ENCODE measurements at regions of chr7 and their contacts with region 1.

Region 1: GRCh38 chr7:111752022-111752582 is 189.8 kb upstream of the IMMP2L start:
- DNase-seq: peak; percentile 14 to 58 (median 27)
- ATAC-seq: peak; percentile 75
- H3K4me3 ChIP-seq: no peak overlapping the region
- H3K4me3 Mint-ChIP-seq: no peak overlapping the region
- H3K27ac ChIP-seq: no peak overlapping the region
- H3K27ac Mint-ChIP-seq: no peak overlapping the region
- H3K4me1 ChIP-seq: no peaks in the 10 kb centered on the region
- H3K4me1 Mint-ChIP-seq: no peaks in the 10 kb centered on the region
- H3K27me3 ChIP-seq: no peaks in the 10 kb centered on the region
- H3K27me3 Mint-ChIP-seq: peaks cover 2 to 16% (median 15%) of the 10 kb centered on the region in 5 donors

Region 2: DNA sequence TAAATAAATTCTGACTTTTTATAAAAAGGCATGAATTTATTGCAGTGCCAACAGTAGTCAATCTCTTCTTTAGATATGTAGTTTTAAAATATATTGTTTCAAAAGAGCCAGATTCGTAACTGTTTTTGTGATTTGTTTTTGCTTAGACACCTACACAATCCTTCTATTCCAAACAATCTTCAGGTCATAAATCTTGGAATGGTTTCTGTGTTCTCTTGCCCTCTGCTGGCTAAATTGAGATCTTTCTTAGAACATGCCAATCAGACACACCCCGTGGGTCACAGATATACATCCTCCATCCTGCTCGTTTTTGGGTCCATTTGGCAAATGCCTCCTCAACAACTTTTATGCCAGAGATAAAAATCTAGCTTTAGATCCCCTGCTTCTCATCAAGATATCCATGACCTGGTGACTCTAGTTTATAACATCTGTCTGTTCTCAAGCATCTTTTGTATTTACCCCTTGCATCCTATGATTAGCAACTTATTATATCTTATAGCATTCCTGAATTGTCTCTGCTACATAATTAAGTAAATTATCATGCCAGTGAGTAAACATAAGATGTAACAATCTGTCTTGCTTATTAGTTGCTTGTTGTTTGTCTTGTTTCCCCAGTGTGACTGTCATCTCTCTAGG is 662.9 kb after region 1 on chr7:
- CTCF ChIA-PET with region 1: no interaction called
- POLR2A ChIA-PET with region 1: no interaction called
- intact Hi-C with region 1: loop called in 1 of 2 experiments (anchors 2 kb)
- DNase-seq: peak in 2 of 9 donors; percentile 15 to 17
- ATAC-seq: no peak
- H3K4me3 ChIP-seq: no peak overlapping the region
- H3K4me3 Mint-ChIP-seq: no peak overlapping the region
- H3K27ac ChIP-seq: no peak overlapping the region
- H3K27ac Mint-ChIP-seq: no peak overlapping the region
- H3K4me1 ChIP-seq: no peaks in the 10 kb centered on the region
- H3K4me1 Mint-ChIP-seq: peaks cover 0 to 5% (median 4%) of the 10 kb centered on the region in 7 donors
- H3K27me3 ChIP-seq: no peaks in the 10 kb centered on the region
- H3K27me3 Mint-ChIP-seq: peaks cover 4 to 29% (median 8%) of the 10 kb centered on the region in 5 donors

Region 3: DNA sequence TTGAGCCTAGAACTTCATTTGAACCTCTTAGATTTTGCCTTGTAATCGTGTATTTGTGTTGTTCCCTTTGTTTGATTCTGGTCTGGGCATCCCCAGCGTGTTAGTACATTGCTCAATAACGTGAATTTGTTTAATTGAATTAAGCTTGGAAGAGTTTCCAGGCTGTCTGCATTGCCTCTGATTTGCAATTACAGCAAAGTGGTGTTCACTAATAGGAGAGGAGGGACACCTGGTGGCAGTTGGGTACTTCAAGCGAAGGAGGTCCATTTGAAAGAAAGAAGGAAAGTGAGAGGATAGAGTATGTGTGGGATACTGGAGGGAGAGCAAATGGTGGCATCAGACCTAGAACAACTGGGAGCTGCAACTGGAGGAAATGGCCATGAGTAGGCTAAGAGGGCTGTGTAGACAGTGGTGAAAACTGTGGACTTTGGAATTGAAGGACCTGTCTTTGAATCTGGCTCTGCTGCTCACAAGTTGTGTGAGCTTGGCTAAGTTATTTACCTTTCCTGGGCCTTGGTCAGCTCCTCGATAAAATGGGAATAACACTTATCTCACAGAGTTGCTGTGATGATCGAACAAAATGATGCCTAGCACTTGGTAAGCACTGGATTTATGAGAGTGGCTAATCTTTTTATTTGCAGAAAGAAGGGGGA is 743.8 kb after region 1 on chr7:
- CTCF ChIA-PET with region 1: interaction called, 4 read pairs
- POLR2A ChIA-PET with region 1: no interaction called
- intact Hi-C with region 1: loop called in 1 of 2 experiments (anchors 1 kb)
- DNase-seq: peak in 6 of 9 donors; percentile 2 to 28 (median 18)
- ATAC-seq: no peak
- H3K4me3 ChIP-seq: no peak overlapping the region
- H3K4me3 Mint-ChIP-seq: no peak overlapping the region
- H3K27ac ChIP-seq: no peak overlapping the region
- H3K27ac Mint-ChIP-seq: no peak overlapping the region
- H3K4me1 ChIP-seq: no peaks in the 10 kb centered on the region
- H3K4me1 Mint-ChIP-seq: no peaks in the 10 kb centered on the region
- H3K27me3 ChIP-seq: no peaks in the 10 kb centered on the region
- H3K27me3 Mint-ChIP-seq: peaks cover 4 to 24% (median 5%) of the 10 kb centered on the region in 5 donors

Region 4: GRCh38 chr7:112898432-112899290 is 1146.6 kb after region 1 on chr7:
- CTCF ChIA-PET with region 1: no interaction called
- POLR2A ChIA-PET with region 1: no interaction called
- intact Hi-C with region 1: loop called in 1 of 2 experiments (anchors 5 kb)
- DNase-seq: peak in 7 of 9 donors; percentile 4 to 30 (median 23)
- ATAC-seq: peak; percentile 81
- H3K4me3 ChIP-seq: no peak overlapping the region
- H3K4me3 Mint-ChIP-seq: no peak overlapping the region
- H3K27ac ChIP-seq: no peak overlapping the region
- H3K27ac Mint-ChIP-seq: peak overlapping the region in 1 of 9 donors; percentile 51
- H3K4me1 ChIP-seq: no peaks in the 10 kb centered on the region
- H3K4me1 Mint-ChIP-seq: peaks cover 0 to 26% (median 14%) of the 10 kb centered on the region in 7 donors
- H3K27me3 ChIP-seq: no peaks in the 10 kb centered on the region
- H3K27me3 Mint-ChIP-seq: no peaks in the 10 kb centered on the region